WTC11 (cell line): ENCODE measurements at regions of chr16 and their contacts with region 1.

Region 1: DNA sequence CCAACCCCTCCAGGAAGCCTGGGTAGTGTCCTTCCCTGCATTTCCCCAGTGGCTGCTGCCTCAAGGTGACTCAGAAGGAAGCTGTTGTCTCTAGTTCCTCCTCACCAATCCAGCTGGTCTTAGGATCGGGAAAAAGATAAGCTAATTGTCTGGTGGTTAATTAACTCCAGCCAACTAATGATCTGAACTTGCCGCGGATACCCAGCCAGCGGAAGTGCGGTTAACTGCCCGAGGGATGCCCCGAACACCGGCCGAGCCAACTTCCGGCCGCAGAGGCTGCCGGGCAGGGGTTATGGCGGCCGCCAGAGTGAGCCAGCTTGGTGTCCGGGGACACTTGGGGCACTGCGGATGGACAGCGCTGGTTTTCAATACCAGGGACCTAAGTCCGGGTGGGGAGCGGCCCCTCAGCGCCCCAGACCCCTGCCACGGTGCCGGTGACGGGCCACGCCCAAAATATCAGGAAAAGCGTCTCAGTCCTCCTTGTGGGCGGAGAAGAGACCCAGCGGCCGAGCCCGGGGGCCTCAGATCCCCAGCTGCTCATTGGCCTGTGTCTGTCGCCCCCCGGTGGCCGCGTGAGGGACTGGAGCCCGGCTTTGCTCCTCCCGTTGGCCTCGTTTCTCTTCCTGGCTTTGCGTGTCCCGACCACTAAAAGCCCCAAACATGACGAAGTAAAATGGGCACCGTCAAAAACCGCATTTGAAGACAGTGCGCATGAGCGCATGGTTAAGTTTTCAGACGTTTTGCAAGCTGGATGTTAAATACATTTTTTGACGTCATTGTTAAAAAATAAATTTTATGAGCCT is 10.2 kb upstream of the PRSS22 start:
- DNase-seq: peak; percentile 97
- ATAC-seq: peak; percentile 94
- H3K4me3 Mint-ChIP-seq: peak overlapping the region; percentile 73
- H3K27ac Mint-ChIP-seq: no peak overlapping the region
- H3K4me1 Mint-ChIP-seq: 0 out of 2 replicates have a peak, but pooled peaks cover 3% of the 10 kb centered on the region
- H3K27me3 Mint-ChIP-seq: peaks cover 80% of the 10 kb centered on the region
- CTCF ChIP-seq: peak; percentile 95

Region 2: DNA sequence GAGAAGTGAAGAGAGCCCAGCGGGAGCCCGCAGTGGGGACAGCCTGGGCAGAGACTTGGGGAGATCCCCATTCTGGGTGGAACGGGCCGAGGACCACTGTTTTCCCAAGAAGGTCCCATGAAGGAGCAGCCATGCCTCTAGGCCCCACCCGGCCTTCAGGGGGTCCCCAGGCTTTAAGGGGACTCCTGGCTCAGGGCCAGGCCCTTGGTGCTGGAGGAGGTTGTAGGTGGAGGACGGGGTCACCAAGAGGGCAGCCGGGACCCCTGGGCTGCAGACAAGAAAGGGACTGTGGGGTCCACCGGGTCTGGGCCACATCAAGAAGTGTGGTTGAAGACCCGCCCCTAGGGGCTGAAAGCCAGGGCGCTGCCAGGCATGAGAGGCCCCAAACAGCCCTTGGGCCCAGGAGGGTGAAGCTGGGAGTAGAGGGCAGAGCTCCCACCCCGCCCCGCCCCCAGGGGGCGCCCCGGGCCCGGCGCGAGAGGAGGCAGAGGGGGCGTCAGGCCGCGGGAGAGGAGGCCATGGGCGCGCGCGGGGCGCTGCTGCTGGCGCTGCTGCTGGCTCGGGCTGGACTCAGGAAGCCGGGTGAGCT is 51.3 kb before region 1 on chr16 and contains the start of gene PRSS21:
- CTCF ChIA-PET with region 1: interaction called, 11 read pairs
- POLR2A ChIA-PET with region 1: no interaction called
- DNase-seq: peak; percentile 67
- ATAC-seq: peak; percentile 83
- H3K4me3 Mint-ChIP-seq: no peak within 1 kb of the TSS
- H3K27ac Mint-ChIP-seq: no peak within 1 kb of the TSS
- H3K4me1 Mint-ChIP-seq: no peaks in the 10 kb centered on the region
- H3K27me3 Mint-ChIP-seq: no peaks in the 10 kb centered on the region
- CTCF ChIP-seq: peak; percentile 68
- total RNA-seq, gene PRSS21: 1.2 to 1.5 TPM (median 1.4 TPM) in 3 replicates

Region 3: DNA sequence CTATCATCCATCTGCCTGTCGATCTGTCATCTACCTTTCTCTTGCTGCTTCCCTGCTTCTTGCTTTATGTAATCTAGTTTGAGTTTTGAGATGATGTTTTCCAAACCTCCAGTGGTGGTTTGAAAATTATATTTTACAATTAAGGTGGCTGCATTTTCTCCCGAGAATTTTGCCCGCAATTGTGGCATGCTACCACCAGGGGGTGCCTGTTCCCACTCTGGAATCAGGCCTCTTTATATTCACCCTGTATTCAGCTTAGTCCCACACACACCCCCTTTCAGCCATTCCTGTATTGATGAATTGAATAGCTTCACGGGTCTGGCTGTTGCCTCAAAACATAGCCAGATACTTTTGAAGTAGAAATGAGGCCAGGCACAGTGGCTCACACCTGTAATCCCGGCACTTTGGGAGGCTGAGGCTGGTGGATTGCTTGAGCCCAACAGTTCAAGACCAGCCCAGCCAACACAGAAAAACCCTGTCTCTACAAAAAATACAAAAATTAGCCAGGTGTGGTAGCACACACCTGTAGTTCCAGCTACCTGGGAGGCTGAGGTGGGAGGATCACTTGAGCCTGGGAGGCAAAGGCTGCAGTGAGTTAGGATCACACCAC is 13.4 kb before region 1 on chr16:
- CTCF ChIA-PET with region 1: interaction called, 45 read pairs
- POLR2A ChIA-PET with region 1: interaction called, 4 read pairs
- DNase-seq: peak; percentile 65
- ATAC-seq: no peak
- H3K4me3 Mint-ChIP-seq: no peak overlapping the region
- H3K27ac Mint-ChIP-seq: no peak overlapping the region
- H3K4me1 Mint-ChIP-seq: peaks cover 5% of the 10 kb centered on the region
- H3K27me3 Mint-ChIP-seq: peaks cover 26% of the 10 kb centered on the region
- CTCF ChIP-seq: peak; percentile 76

Region 4: DNA sequence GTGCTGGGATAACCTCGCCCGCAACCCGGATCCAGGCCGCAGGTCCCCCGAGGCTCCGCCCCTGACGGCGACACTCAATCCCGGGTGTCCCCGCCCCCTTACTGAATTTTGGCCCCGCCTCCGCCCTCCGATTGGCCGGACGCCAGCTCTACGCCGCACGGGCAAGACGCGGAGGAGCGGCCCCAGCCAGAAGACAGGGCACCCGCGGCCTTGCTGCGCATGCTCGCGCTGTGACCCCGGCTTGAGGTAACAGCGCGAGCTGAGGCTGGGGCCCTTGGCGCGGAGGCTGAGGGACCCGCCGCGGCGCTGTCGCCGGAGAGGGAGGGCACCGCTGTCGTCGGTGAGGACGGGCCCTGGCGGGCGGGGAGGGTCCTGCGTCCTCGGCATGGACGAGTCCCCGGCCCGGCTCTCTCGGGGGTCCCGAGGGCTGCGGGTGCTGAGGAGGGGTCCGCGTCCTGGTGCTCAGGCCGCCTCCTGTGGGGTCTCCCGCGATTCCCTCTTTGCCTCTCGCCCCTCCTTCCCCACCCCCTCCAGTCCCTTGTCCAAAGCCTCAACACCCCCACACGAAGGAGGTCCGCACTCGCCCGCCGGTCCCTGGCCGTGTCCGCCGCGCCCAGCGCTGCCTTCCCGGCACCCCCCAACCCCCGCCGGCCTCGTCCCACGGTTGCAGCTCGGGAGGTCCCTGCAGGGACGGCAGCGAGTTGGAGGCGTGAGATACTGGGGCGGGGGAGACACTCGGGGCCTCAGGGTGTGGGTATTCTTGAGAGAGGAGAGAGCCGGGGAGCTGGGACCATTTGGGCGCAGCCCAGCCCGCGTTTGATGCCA is 15.1 kb after region 1 on chr16 and contains the start of gene FLYWCH2:
- CTCF ChIA-PET with region 1: interaction called, 25 read pairs
- POLR2A ChIA-PET with region 1: interaction called, 6 read pairs
- DNase-seq: peak; percentile 100
- ATAC-seq: peak; percentile 87
- H3K4me3 Mint-ChIP-seq: peak within 1 kb of the TSS; percentile 83
- H3K27ac Mint-ChIP-seq: peak within 1 kb of the TSS; percentile 82
- H3K4me1 Mint-ChIP-seq: peaks cover 6% of the 10 kb centered on the region
- H3K27me3 Mint-ChIP-seq: peaks cover 40% of the 10 kb centered on the region
- CTCF ChIP-seq: no peak
- total RNA-seq, gene FLYWCH2: 19.7 to 25.0 TPM (median 20.7 TPM) in 3 replicates

Region 5: DNA sequence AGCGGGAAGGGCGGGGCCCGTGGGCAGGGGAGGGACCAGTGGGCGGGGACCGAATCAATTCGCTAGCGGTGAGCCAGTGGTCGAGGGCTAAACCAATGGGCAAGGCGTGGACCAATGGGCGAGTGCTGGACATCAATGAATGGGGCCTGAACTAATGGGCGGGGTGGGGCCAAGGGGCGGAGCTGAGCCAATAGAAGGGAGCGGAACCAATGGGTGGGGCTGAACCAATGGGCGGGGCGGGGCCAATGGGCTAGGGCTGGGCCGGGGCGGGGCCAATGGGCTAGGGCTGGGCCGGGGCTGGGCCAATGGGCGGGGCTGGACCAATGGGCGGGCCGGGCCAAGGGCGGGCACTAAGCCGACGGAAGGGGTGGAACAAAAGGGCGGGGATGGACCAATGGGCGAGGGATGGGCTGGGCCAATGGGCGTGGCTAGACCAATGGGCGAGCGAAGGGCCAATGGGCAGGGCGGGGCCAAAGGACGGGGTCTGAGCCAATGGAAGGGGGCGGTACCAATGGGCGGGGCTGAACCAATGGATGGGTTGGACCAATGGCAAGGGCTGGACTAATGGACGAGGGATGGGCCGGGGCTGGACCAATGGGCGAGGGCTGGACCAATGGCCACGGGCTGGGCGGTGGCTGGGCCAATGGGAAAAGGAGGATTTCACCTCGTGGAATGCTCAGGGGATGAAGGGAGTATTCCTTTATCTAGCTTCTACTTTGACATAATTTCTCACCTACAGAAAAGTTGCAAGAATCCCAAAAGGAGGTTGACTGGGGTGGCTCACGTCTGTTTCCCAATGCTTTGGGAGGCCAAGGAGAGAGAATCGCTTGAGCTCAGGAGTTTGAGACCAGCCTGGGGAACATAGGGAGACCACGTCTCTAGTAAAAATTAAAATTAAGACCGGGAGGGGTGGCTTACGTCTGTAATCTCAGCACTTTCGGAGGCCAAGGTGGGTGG is 37.5 kb after region 1 on chr16:
- CTCF ChIA-PET with region 1: interaction called, 10 read pairs
- POLR2A ChIA-PET with region 1: interaction called, 6 read pairs
- DNase-seq: peak; percentile 100
- ATAC-seq: peak; percentile 82
- H3K4me3 Mint-ChIP-seq: peak overlapping the region; percentile 97
- H3K27ac Mint-ChIP-seq: peak overlapping the region; percentile 91
- H3K4me1 Mint-ChIP-seq: peaks cover 17% of the 10 kb centered on the region
- H3K27me3 Mint-ChIP-seq: peaks cover 18% of the 10 kb centered on the region
- CTCF ChIP-seq: no peak

Region 6: DNA sequence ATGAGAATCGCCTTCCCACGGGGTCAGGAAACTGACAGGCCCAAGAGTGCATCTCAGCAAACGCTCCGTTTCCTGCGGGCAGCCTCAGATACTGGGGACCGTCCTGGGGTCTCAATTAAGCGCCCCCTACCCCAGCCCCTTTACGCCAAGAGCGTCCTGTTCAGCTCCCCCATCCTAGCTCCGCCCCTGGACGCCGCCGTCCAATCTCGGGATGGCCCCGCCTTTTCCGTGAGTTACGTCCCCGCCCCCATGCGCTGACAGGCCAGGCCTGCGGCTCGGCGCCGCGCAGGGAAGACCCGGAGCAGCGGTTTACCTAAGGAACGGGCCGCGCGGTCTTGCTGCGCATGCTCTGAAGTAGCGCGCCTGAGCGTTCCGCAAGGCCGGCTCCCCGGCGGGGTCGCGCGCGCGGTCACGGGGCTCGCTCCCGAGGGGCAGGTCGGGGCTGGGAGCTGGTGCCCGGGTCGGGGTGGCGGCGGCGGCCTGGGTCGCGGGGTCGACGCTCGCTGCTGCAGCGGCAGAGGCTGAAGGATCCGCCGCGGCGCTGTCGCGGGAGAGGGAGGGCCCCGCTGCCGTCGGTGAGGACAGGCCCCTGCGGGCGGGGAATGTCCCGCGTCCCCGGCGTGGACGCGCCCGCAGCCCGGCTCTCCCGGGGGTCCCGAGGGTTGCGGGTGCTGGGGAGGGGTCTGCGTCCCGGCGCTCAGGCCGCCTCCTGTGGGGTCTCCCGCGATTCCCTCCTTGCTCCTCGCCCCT is 43.6 kb after region 1 on chr16 and contains the start of gene FLYWCH1:
- CTCF ChIA-PET with region 1: interaction called, 11 read pairs
- POLR2A ChIA-PET with region 1: no interaction called
- DNase-seq: peak; percentile 99
- ATAC-seq: peak; percentile 98
- H3K4me3 Mint-ChIP-seq: peak within 1 kb of the TSS; percentile 86
- H3K27ac Mint-ChIP-seq: peak within 1 kb of the TSS; percentile 83
- H3K4me1 Mint-ChIP-seq: peaks cover 14% of the 10 kb centered on the region
- H3K27me3 Mint-ChIP-seq: peaks cover 37% of the 10 kb centered on the region
- CTCF ChIP-seq: no peak
- total RNA-seq, gene FLYWCH1: 27.2 to 34.2 TPM (median 32.6 TPM) in 3 replicates

Region 7: DNA sequence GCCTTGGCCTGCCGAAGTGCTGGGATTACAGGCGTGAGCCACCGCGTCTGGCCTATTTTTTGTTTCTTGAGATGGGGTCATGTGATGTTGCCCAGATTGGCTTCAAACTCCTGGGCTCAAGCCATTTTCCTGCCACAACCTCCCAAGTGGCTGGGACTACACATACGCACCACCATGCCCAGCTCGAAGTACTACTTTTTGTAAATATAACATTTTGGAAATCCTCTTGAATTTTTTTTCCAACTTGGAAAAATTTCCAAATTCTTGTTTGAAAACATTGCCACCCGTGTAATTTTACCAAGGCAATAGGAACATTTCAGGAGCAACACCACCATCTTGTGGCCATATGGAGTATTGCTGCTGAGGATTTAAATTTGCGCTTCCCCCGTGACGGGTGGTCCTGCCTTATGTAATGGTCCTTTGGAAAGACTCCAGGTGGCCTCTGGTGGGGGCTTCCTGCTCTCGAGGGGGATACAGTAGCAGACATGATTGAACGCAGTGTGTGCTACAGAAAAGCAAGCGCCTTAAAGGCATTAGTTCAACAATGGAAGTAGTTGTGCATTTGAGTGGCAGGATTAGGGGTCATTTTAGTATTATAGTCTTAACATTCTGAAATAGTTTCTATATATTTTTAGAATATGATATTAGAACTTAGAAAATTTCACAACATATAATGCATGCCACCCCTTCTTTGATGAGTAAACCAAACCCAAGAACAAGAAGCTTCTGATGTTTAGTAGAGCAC is 51.5 kb after region 1 on chr16:
- CTCF ChIA-PET with region 1: interaction called, 11 read pairs
- POLR2A ChIA-PET with region 1: no interaction called
- DNase-seq: peak; percentile 73
- ATAC-seq: peak; percentile 50; the same call in 1 of the 2 replicates
- H3K4me3 Mint-ChIP-seq: no peak overlapping the region
- H3K27ac Mint-ChIP-seq: peak overlapping the region; percentile 72; the same call in 1 of the 2 replicates
- H3K4me1 Mint-ChIP-seq: no peaks in the 10 kb centered on the region; the same call in 1 of the 2 replicates
- H3K27me3 Mint-ChIP-seq: no peaks in the 10 kb centered on the region
- CTCF ChIP-seq: peak; percentile 93

Region 8: GRCh38 chr16:3022208-3022696 is 154.1 kb after region 1 on chr16:
- CTCF ChIA-PET with region 1: no interaction called
- POLR2A ChIA-PET with region 1: no interaction called
- DNase-seq: peak; percentile 84
- ATAC-seq: no peak
- H3K4me3 Mint-ChIP-seq: peak overlapping the region; percentile 86
- H3K27ac Mint-ChIP-seq: peak overlapping the region; percentile 99
- H3K4me1 Mint-ChIP-seq: peaks cover 38% of the 10 kb centered on the region
- H3K27me3 Mint-ChIP-seq: peaks cover 2% of the 10 kb centered on the region; the same call in 1 of the 2 replicates
- CTCF ChIP-seq: no peak; the same call in 1 of the 2 replicates